ENCODE measurements at regions of chr1 and their contacts with region 1.

Region 1: GRCh38 chr1:180252638-180253536 is 22.8 kb downstream of the LHX4 start:
- DNase-seq: peak; percentile 88
- ATAC-seq: peak; percentile 80
- H3K4me3 ChIP-seq: no peak overlapping the region
- H3K27ac ChIP-seq: no peak overlapping the region
- H3K4me1 ChIP-seq: no peaks in the 10 kb centered on the region
- H3K27me3 ChIP-seq: peaks cover 33% of the 10 kb centered on the region
- CTCF ChIP-seq: peak; percentile 85

Region 2: DNA sequence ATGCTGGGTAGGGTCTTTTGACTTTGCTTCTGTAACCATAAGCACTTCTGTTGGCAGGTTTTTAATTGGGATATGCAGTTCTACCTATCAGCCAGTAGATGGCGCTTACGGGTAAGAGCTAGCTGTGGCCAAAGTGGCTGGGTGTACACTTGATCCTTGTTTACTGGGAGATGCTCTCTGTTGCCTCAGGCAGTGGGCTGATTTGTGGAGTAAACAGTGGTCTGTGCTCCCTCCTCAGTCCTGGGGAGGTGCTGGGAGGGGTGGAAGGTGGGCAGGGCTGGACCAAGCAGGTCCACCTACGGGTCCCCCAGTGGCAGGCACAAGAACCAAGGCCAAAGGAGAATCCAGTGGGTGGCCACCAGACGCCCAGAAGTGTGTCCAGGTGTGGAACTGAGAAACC is 1484.5 kb before region 1 on chr1:
- intact Hi-C with region 1: no loop called
- DNase-seq: no peak
- ATAC-seq: peak; percentile 85
- H3K4me3 ChIP-seq: no peak overlapping the region
- H3K27ac ChIP-seq: no peak overlapping the region
- H3K4me1 ChIP-seq: no peaks in the 10 kb centered on the region
- H3K27me3 ChIP-seq: no peaks in the 10 kb centered on the region
- CTCF ChIP-seq: peak; percentile 72

Region 3: DNA sequence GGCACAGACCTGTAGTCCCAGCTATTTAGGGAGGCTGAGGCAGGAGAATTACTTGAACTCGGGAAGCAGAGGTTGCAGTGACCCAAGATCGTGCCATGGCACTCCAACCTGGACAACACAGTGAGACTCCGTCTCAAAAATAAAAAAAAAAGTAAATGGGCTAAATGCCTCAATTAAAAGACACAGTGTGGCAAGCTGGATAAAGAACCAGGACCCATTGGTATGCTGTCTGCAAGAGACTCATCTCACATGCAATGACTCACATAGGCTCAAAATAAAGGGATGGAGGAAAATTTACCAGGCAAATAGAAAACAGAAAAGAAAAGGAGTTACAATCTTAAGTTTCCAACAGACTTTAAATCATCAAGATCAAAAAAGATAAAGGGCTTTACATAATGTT is 209.2 kb after region 1 on chr1:
- intact Hi-C with region 1: loop called (anchors 10 kb)
- DNase-seq: no peak
- ATAC-seq: no peak
- H3K4me3 ChIP-seq: no peak overlapping the region
- H3K27ac ChIP-seq: no peak overlapping the region
- H3K4me1 ChIP-seq: no peaks in the 10 kb centered on the region
- H3K27me3 ChIP-seq: no peaks in the 10 kb centered on the region
- CTCF ChIP-seq: no peak

Region 4: DNA sequence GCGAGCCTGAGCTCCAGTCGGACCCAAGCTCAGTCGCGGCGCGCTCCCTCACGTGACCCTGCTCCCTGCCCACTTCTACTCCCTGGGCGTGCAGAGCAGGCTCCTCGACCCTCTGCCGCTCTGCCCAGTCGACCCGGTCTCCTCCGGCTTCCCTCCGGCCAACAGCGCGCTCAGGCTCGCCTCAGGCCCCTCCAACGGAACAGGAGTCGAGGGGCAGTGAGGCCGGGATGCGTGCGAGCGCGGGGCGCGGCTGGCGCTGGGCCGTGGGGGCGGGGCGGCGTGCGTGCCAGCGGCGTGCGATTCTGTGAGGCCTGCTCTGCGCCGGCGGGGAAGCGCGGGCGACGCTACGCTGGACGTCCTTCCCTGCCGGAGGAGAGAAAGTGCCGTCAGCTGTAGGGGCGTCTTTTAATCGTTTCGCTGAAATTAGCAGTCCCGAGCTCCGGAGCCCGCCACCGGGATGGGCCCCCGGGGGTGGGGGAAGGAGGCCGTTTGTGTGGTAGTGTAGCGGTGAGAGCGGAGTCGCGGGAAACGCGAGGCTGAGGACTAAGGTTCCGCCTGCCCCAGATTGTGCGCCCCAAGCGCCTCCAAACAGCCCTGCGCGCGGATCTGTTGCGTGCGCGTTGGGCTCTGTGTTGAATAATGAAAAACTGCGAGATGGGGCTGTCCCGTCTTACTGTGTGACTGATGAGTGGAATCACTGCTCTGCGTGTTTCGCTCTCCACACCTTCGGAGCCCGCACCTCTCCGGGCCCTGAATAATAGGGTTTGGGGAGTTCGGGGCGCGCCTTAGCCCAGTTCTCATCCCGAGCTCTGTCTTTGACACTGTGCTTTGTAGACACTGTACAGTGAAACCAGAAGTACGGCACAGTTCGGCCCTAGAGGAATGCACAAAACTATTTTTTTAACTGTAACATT is 249.7 kb after region 1 on chr1 and contains the start of gene ACBD6:
- intact Hi-C with region 1: no loop called
- DNase-seq: peak; percentile 93
- ATAC-seq: peak; percentile 95
- H3K4me3 ChIP-seq: peak within 1 kb of the TSS; percentile 94
- H3K27ac ChIP-seq: peak within 1 kb of the TSS; percentile 92
- H3K4me1 ChIP-seq: peaks cover 22% of the 10 kb centered on the region
- H3K27me3 ChIP-seq: no peaks in the 10 kb centered on the region
- CTCF ChIP-seq: peak; percentile 30
- total RNA-seq, gene ACBD6: 33.6 TPM